ENCODE measurements at regions of chr1 and their contacts with region 1.

Region 1: GRCh38 chr1:43015015-43015668 is 56.5 kb upstream of the SLC2A1 start:
- DNase-seq: no peak
- ATAC-seq: no peak
- H3K4me3 ChIP-seq: no peak overlapping the region
- H3K27ac ChIP-seq: no peak overlapping the region
- H3K4me1 ChIP-seq: no peaks in the 10 kb centered on the region
- H3K27me3 ChIP-seq: no peaks in the 10 kb centered on the region; a peak in 3 of 4 replicates
- CTCF ChIP-seq: no peak
- EP300 ChIP-seq: no peak
- POLR2A ChIP-seq: no peak
- RAD21 ChIP-seq: no peak

Region 2: GRCh38 chr1:42968654-42969053 is 46.5 kb before region 1 on chr1:
- CTCF ChIA-PET with region 1: no interaction called
- POLR2A ChIA-PET with region 1: no interaction called
- RAD21 ChIA-PET with region 1: no interaction called
- SMC1A ChIA-PET with region 1: no interaction called
- in situ Hi-C with region 1: loop called (anchors 5 kb)
- intact Hi-C with region 1: no loop called
- DNase-seq: no peak
- ATAC-seq: no peak
- H3K4me3 ChIP-seq: no peak overlapping the region
- H3K27ac ChIP-seq: no peak overlapping the region
- H3K4me1 ChIP-seq: no peaks in the 10 kb centered on the region
- H3K27me3 ChIP-seq: no peaks in the 10 kb centered on the region
- CTCF ChIP-seq: no peak
- EP300 ChIP-seq: no peak
- POLR2A ChIP-seq: no peak
- RAD21 ChIP-seq: no peak

Measured in GM12878 (cell line).